ENCODE measurements at regions of chr10 and their contacts with region 1.

Region 1: DNA sequence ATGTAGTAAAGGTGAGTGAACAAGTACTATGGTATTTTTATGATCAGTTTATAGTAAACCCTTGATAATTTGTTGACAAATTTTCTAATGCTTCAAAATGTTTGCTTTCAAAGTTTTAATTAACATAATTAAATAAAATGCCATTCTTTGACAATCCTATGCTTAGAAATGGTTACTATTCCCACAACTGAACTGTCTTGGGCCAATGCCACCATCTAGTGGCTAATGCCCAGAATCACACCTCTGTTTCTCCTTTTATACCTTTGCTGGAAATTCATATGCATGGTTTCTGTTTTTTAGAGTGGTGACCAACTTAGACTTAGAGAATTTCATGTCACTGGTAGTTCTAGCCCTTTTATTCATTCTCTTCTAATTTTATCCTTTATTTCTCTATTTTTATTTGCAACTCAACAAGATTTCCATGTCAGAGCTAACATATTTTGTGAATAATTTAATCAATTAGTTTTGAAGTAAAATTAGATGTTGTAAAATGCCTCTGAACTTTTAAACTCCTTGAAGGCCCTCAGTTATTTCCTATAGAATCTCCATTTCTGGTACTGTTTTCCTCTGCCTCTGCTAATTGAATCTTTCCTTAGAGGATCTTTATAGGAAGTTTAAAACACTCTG is 31.1 kb downstream of the PCGF5 start:
- DNase-seq: peak; percentile 75
- ATAC-seq: peak; percentile 82
- H3K4me3 ChIP-seq: no peak overlapping the region
- H3K4me3 Mint-ChIP-seq: no peak overlapping the region
- H3K27ac ChIP-seq: no peak overlapping the region
- H3K27ac Mint-ChIP-seq: no peak overlapping the region
- H3K4me1 ChIP-seq: no peaks in the 10 kb centered on the region
- H3K4me1 Mint-ChIP-seq: peaks cover 2% of the 10 kb centered on the region
- H3K27me3 ChIP-seq: no peaks in the 10 kb centered on the region
- H3K27me3 Mint-ChIP-seq: no peaks in the 10 kb centered on the region
- CTCF ChIP-seq: peak; percentile 97

Region 2: GRCh38 chr10:90912174-90912573 is 339.4 kb before region 1 on chr10:
- CTCF ChIA-PET with region 1: interaction called, 100 read pairs
- POLR2A ChIA-PET with region 1: no interaction called
- intact Hi-C with region 1: loop called (anchors 1 kb)
- DNase-seq: no peak
- ATAC-seq: no peak
- H3K4me3 ChIP-seq: no peak overlapping the region
- H3K4me3 Mint-ChIP-seq: no peak overlapping the region
- H3K27ac ChIP-seq: no peak overlapping the region
- H3K27ac Mint-ChIP-seq: no peak overlapping the region
- H3K4me1 ChIP-seq: no peaks in the 10 kb centered on the region
- H3K4me1 Mint-ChIP-seq: peaks cover 2% of the 10 kb centered on the region
- H3K27me3 ChIP-seq: no peaks in the 10 kb centered on the region
- H3K27me3 Mint-ChIP-seq: no peaks in the 10 kb centered on the region
- CTCF ChIP-seq: no peak

Region 3: GRCh38 chr10:91043173-91043910 is 208.2 kb before region 1 on chr10:
- CTCF ChIA-PET with region 1: interaction called, 18 read pairs
- POLR2A ChIA-PET with region 1: no interaction called
- intact Hi-C with region 1: loop called (anchors 1 kb)
- DNase-seq: peak; percentile 10
- ATAC-seq: no peak
- H3K4me3 ChIP-seq: no peak overlapping the region
- H3K4me3 Mint-ChIP-seq: no peak overlapping the region
- H3K27ac ChIP-seq: no peak overlapping the region
- H3K27ac Mint-ChIP-seq: no peak overlapping the region
- H3K4me1 ChIP-seq: no peaks in the 10 kb centered on the region
- H3K4me1 Mint-ChIP-seq: no peaks in the 10 kb centered on the region
- H3K27me3 ChIP-seq: no peaks in the 10 kb centered on the region
- H3K27me3 Mint-ChIP-seq: no peaks in the 10 kb centered on the region
- CTCF ChIP-seq: no peak

Region 4: GRCh38 chr10:91096274-91096673 is 155.3 kb before region 1 on chr10:
- CTCF ChIA-PET with region 1: interaction called, 328 read pairs
- POLR2A ChIA-PET with region 1: no interaction called
- intact Hi-C with region 1: no loop called
- DNase-seq: no peak
- ATAC-seq: no peak
- H3K4me3 ChIP-seq: no peak overlapping the region
- H3K4me3 Mint-ChIP-seq: no peak overlapping the region
- H3K27ac ChIP-seq: no peak overlapping the region
- H3K27ac Mint-ChIP-seq: no peak overlapping the region
- H3K4me1 ChIP-seq: no peaks in the 10 kb centered on the region
- H3K4me1 Mint-ChIP-seq: peaks cover 3% of the 10 kb centered on the region
- H3K27me3 ChIP-seq: no peaks in the 10 kb centered on the region
- H3K27me3 Mint-ChIP-seq: no peaks in the 10 kb centered on the region
- CTCF ChIP-seq: no peak

Region 5: DNA sequence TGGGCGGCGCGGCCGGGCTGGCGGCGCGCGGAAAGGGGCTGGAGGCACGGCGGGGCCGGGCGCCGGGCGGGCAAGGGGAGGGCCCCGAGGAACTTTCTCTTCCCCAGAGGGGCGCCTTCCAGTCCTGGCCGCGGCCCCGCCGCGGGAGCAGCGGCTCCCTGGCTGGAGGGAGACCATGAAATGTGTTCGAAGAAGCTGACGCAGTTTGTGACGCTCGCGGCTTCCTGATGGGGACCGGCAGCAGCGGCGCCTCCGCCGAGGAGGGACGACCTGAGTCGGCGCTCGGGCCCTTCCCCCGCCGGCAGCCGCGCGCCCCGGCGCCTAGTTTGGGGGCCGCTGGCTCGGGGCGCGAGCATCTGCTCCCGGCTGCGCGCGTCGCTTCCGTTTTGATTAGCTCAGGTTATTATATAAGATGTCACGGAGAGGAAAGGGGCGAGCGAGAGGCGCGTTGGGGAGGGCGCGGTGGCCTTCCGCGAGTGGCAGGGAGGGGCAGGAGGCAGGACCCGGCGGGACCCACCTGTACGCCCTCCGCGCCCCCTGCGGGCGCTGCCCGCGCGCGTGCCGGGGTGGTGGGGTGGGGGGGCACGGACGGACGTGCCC is 88.2 kb before region 1 on chr10:
- CTCF ChIA-PET with region 1: interaction called, 70 read pairs
- POLR2A ChIA-PET with region 1: interaction called, 7 read pairs
- intact Hi-C with region 1: loop called (anchors 1 kb)
- DNase-seq: peak; percentile 92
- ATAC-seq: peak; percentile 48
- H3K4me3 ChIP-seq: peak overlapping the region; percentile 34 to 84 (median 71)
- H3K4me3 Mint-ChIP-seq: peak overlapping the region; percentile 94
- H3K27ac ChIP-seq: peak overlapping the region; percentile 85 to 90
- H3K27ac Mint-ChIP-seq: peak overlapping the region; percentile 97
- H3K4me1 ChIP-seq: peaks cover 14 to 15% of the 10 kb centered on the region in 2 donors
- H3K4me1 Mint-ChIP-seq: peaks cover 49% of the 10 kb centered on the region
- H3K27me3 ChIP-seq: no peaks in the 10 kb centered on the region
- H3K27me3 Mint-ChIP-seq: no peaks in the 10 kb centered on the region
- CTCF ChIP-seq: peak; percentile 34

Region 6: GRCh38 chr10:91210435-91210834 is 41.1 kb before region 1 on chr10:
- CTCF ChIA-PET with region 1: interaction called, 13 read pairs
- POLR2A ChIA-PET with region 1: no interaction called
- intact Hi-C with region 1: no loop called
- DNase-seq: peak; percentile 75
- ATAC-seq: peak; percentile 83
- H3K4me3 ChIP-seq: no peak overlapping the region
- H3K4me3 Mint-ChIP-seq: peak overlapping the region; percentile 36
- H3K27ac ChIP-seq: peak overlapping the region; percentile 54 to 69
- H3K27ac Mint-ChIP-seq: peak overlapping the region; percentile 80
- H3K4me1 ChIP-seq: peaks cover 64 to 66% of the 10 kb centered on the region in 2 donors
- H3K4me1 Mint-ChIP-seq: peaks cover 73% of the 10 kb centered on the region
- H3K27me3 ChIP-seq: no peaks in the 10 kb centered on the region
- H3K27me3 Mint-ChIP-seq: no peaks in the 10 kb centered on the region
- CTCF ChIP-seq: no peak

Region 7: GRCh38 chr10:91226093-91226492 is 25.4 kb before region 1 on chr10:
- CTCF ChIA-PET with region 1: interaction called, 16 read pairs
- POLR2A ChIA-PET with region 1: no interaction called
- intact Hi-C with region 1: loop called (anchors 2 kb)
- DNase-seq: no peak
- ATAC-seq: no peak
- H3K4me3 ChIP-seq: no peak overlapping the region
- H3K4me3 Mint-ChIP-seq: no peak overlapping the region
- H3K27ac ChIP-seq: no peak overlapping the region
- H3K27ac Mint-ChIP-seq: no peak overlapping the region
- H3K4me1 ChIP-seq: peaks cover 14 to 20% of the 10 kb centered on the region in 2 donors
- H3K4me1 Mint-ChIP-seq: peaks cover 51% of the 10 kb centered on the region
- H3K27me3 ChIP-seq: no peaks in the 10 kb centered on the region
- H3K27me3 Mint-ChIP-seq: no peaks in the 10 kb centered on the region
- CTCF ChIP-seq: no peak

Measured in B cell (primary cell).